Posterior vena cava (tissue), 2 donors: ENCODE measurements at regions of chr9 and their contacts with region 1.

Region 1: DNA sequence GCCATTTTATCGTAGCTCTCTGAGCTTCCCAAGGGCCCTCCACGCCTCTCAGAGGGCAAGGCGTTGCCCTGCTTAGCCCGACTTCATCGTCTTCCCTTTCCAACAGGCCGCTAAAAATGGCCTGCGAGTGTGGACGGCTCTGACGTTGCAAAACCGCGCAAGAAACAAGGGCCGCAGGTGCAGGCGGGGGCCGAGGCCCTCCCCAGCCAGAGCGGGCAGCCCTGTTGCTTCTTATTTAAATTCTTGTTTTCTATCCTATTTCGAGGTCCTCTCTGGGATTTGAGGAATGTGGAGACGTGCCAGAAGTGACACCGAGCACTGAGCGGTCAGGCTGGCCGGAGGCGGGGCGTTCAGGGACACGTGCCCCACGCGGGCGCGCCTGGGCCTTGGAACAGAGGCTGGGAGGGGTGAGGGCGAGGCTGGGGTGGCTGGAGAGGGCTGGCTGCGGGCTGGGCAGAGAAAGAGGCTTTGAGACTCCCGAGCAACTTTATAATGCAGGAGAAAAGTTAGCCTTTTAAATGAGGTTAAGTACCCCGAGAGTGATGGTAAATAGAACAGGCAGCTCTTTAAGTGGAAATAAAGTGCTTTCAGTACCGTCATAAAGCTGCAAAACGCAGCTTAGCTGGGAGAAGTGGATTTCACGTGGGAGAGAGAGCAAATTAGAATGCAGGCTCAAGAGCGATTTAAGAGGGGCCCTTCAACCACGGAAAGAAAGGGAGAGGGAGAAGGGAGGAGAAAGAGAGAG is 243.6 kb downstream of the AUH start:
- DNase-seq: peak; percentile 95

Region 2: DNA sequence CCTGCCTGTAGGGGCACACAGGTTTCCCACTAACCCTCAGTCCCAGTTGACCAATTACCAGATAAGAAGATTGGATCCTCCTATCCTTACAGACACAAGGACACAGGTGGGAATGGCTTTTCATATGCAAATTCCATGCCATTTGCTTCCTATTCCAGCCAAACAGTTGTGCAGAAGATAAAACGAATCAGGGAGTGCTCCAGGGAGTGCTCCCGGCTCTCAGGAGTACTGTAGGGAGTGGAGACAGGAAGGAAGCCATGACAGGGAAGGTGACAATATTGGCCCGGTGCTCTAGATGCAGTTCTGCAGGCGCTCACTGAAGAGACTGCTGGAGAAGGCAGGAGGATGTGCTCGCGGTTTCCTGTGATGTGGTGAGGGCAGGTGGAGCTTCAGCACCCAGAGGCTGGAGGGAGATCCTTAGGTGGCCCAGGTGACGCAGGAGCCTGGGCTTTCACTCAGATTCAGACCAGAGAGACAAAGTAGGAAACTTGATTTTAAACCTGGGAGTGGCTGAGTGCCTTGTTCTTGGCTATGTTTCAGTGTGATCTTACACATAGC is 16.4 kb before region 1 on chr9:
- intact Hi-C with region 1: no loop called
- DNase-seq: peak; percentile 75

Region 3: GRCh38 chr9:91193658-91194391 is 75.7 kb after region 1 on chr9:
- intact Hi-C with region 1: loop called in 1 of 2 experiments (anchors 5 kb)
- DNase-seq: peak; percentile 98